Vagina (tissue), 2 donors: ENCODE measurements at regions of chr17 and their contacts with region 1.

Region 1: DNA sequence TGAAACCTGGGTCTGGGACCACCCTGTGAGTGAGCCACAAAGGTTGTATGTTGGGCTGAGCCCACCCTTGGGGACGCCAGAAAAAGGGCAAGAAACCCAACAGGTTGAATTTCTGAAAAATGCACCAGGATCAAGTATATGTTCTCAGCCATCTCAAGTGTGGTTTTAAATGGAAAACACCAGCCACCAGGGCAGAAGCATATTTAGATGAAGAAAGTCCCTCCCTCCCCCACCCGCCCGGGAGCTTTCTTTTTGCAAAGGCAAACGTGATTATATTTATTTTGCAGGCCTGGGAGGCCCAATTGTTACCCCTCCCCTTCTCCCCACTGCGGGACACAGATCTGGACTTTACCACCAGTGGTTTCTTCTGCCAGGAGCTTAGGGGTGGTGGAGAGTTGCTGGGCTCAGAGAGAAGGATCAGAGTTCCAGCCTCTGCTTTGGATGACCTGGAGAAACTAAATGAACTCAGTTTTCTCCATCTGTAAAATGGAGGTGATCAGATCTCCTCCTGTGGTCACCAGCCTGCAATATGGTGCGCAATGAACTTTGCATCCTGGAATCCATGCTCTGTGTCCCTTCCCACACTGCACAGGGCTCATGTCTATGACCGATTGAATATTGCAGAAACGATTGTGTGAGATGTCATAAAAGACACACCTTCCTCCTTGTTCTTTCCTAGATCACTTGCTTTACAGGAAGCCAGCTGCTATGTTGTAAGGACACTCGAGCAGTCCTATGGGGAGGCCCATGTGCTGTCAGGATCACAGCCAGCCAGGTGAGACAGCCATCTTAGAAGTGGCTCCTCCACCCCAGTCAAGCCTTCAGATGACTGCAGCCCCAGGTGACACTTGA is 21.0 kb upstream of the NGFR start:
- DNase-seq: no peak
- H3K4me3 ChIP-seq: no peak overlapping the region
- H3K27ac ChIP-seq: no peak overlapping the region
- H3K4me1 ChIP-seq: peaks cover 14% of the 10 kb centered on the region
- H3K27me3 ChIP-seq: no peaks in the 10 kb centered on the region
- CTCF ChIP-seq: no peak
- POLR2A ChIP-seq: no peak

Region 2: GRCh38 chr17:49502254-49502653 is 28.1 kb after region 1 on chr17:
- intact Hi-C with region 1: loop called (anchors 1 kb)
- DNase-seq: no peak
- H3K4me3 ChIP-seq: no peak overlapping the region
- H3K27ac ChIP-seq: no peak overlapping the region
- H3K4me1 ChIP-seq: peaks cover 18% of the 10 kb centered on the region
- H3K27me3 ChIP-seq: no peaks in the 10 kb centered on the region
- CTCF ChIP-seq: no peak
- POLR2A ChIP-seq: no peak